ENCODE measurements at regions of chr16 and their contacts with region 1.

Region 1: GRCh38 chr16:21300309-21301167 is 22.4 kb upstream of the CRYM start:
- DNase-seq: peak in 1 of 2 donors; percentile 100
- H3K4me3 ChIP-seq: peak overlapping the region; percentile 74 to 80
- H3K27ac ChIP-seq: peak overlapping the region; percentile 94
- H3K4me1 ChIP-seq: peaks cover 20% of the 10 kb centered on the region
- H3K27me3 ChIP-seq: no peaks in the 10 kb centered on the region
- CTCF ChIP-seq: peak; percentile 57 to 75 (median 71)
- POLR2A ChIP-seq: peak in 1 of 2 donors; percentile 69

Region 2: DNA sequence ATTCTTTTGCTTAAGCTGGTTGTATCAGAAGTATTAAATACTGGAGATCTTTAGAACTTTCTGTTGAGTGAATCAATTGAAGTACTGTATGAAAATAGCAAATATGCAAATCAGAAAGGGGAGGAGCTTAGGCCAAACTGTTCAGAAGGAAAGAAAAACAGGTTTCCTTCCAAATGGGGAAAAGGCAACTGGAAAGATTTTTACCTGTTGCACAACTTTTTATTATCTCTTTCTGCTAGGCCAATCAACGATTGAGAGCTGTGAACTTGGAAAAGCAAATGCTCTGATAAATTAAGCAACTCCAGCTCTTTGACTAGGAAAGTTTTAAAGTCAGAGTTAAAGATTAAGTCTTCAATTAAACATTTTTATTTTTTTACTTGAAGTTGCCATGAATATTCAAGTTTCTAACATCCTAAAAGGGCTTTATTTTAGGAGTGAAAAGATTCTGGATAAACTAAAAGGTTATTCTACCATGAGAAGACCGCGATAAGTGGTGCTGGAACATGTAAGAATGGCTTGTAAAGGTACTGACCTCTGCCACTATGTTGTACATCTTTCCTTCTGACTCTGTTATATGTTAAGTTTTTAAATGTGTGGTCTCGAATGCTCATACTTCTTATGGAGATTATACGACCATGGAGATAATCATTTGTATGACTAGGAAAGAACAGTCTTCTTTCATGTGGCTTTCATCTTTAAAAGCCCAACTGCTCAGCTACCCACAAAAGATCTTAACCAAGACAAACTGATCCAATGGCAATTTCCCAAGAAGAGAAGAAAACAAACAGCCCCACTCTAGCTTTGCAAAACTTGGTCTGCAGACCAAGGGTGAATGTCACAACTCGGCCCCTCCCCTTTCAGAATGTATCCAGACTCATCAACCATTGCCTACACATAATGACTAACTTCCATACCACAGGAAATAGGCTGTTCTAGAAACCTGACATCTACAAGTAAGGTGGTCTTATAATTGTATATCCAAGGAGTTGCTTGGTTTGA is 416.7 kb before region 1 on chr16:
- intact Hi-C with region 1: no loop called
- DNase-seq: no peak
- H3K4me3 ChIP-seq: no peak overlapping the region
- H3K27ac ChIP-seq: peak overlapping the region; percentile 42
- H3K4me1 ChIP-seq: peaks cover 59% of the 10 kb centered on the region
- H3K27me3 ChIP-seq: no peaks in the 10 kb centered on the region
- CTCF ChIP-seq: no peak
- POLR2A ChIP-seq: no peak

Region 3: DNA sequence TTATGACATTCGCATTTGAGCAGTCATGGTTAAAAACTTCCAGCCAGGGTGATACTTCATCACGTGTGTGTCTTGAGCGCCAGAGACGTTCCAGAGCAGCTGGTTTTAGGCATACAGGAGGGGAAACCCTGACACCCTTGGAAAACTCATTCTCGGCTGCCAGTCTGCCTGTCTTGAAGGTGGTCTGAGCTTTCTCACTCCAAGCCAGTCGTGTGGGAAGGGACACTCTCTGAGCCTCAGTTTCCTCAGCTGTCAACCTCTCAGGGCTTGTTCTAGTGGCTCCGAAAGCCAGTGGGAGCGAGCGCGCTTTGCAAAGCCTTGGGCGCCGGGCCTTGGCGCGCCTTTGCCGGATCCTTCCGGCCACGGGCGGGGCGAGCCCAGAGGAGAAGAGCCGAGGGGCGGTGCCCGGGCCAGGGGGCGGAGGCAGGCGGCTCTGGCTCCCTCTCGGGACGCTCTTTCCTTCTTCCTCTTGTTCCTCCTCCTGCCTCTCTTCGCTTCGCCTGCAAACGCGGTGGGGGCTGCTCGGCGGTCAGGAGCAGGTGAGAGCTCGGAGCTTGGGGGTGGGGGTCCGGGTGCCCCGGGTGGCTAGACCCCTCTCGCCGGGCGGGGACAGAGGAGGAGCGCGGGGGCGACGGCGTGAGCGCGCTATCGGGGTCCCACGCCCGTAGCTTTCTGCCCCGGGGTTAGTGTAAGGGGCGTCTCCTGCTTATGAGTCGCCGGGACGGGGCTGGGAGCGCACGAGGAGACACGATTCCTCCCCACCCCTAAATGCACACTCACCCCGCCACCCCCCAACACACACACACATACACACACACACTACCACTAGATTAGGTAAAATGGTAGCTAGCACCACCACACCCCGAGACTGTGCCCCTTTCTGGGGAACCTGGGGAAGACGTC is 142.1 kb before region 1 on chr16 and contains the start of gene LDAF1:
- intact Hi-C with region 1: loop called (anchors 5 kb)
- DNase-seq: peak in 1 of 2 donors; percentile 92
- H3K4me3 ChIP-seq: peak within 1 kb of the TSS; percentile 59 to 74
- H3K27ac ChIP-seq: peak within 1 kb of the TSS; percentile 94
- H3K4me1 ChIP-seq: peaks cover 58% of the 10 kb centered on the region
- H3K27me3 ChIP-seq: no peaks in the 10 kb centered on the region
- CTCF ChIP-seq: no peak
- POLR2A ChIP-seq: peak in 1 of 2 donors; percentile 67
- total RNA-seq, gene LDAF1: 63.8 TPM

Region 4: GRCh38 chr16:21184834-21185233 is 115.7 kb before region 1 on chr16:
- intact Hi-C with region 1: loop called (anchors 10 kb)
- DNase-seq: no peak
- H3K4me3 ChIP-seq: no peak overlapping the region
- H3K27ac ChIP-seq: no peak overlapping the region
- H3K4me1 ChIP-seq: no peaks in the 10 kb centered on the region
- H3K27me3 ChIP-seq: no peaks in the 10 kb centered on the region
- CTCF ChIP-seq: no peak
- POLR2A ChIP-seq: no peak

Measured in vagina (tissue), 2 donors.